Naive thymus-derived CD4-positive, alpha-beta T cell (primary cell): ENCODE measurements at regions of chr10 and their contacts with region 1.

Region 1: DNA sequence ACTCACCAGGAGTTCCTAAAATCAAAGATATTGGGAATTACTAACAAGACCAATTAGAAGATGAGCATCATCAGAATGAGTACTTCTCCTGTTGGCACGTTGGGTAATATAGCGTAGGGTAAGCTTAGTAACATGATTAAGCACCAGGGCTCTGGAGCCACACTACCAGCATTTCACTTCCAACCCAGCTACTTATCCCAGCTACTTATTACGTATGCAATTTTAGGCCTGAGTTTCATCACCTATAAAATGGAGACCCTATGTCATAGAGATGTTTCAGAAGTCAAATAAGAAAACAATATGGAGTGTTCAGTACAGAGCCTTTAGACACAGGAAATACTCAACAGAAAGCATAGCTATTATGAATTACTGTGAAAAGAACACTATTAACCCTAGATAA is 19.0 kb downstream of the GDI2 start:
- DNase-seq: no peak
- ATAC-seq: no peak
- H3K4me3 ChIP-seq: no peak overlapping the region
- H3K4me3 Mint-ChIP-seq: no peak overlapping the region
- H3K27ac ChIP-seq: no peak overlapping the region
- H3K27ac Mint-ChIP-seq: peak overlapping the region in 6 of 9 donors; percentile 12 to 59 (median 21)
- H3K4me1 ChIP-seq: no peaks in the 10 kb centered on the region
- H3K4me1 Mint-ChIP-seq: peaks cover under 1 to 29% (median 6%) of the 10 kb centered on the region in 7 donors
- H3K27me3 ChIP-seq: no peaks in the 10 kb centered on the region
- H3K27me3 Mint-ChIP-seq: no peaks in the 10 kb centered on the region

Region 2: DNA sequence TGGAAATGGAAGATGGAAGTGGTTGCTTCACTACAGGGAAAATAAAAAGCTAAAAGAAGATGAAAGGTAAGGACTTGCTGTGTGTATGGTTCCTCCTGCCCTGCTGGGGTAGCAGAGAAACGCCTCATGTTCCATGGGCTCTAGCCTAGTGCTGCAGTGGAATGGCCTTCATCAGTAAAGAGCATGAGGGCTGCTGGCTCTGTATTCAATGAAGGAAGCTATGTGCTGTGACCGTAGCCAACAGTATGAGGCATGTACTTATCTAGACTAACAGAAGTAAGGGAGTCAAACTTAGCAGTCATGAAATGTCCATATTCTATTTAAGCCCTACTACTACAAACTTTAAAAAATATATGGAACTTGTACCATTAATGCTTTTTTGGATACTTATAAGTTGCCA is 35.3 kb before region 1 on chr10:
- CTCF ChIA-PET with region 1: no interaction called
- POLR2A ChIA-PET with region 1: interaction called, 3 read pairs
- intact Hi-C with region 1: loop called in 1 of 2 experiments (anchors 5 kb)
- DNase-seq: no peak
- ATAC-seq: no peak
- H3K4me3 ChIP-seq: no peak overlapping the region
- H3K4me3 Mint-ChIP-seq: no peak overlapping the region
- H3K27ac ChIP-seq: no peak overlapping the region
- H3K27ac Mint-ChIP-seq: peak overlapping the region in 6 of 9 donors; percentile 8 to 80 (median 70)
- H3K4me1 ChIP-seq: peaks cover 0 to 4% of the 10 kb centered on the region in 2 donors
- H3K4me1 Mint-ChIP-seq: peaks cover 4 to 22% (median 12%) of the 10 kb centered on the region in 7 donors
- H3K27me3 ChIP-seq: no peaks in the 10 kb centered on the region
- H3K27me3 Mint-ChIP-seq: no peaks in the 10 kb centered on the region